Ascending aorta (tissue), 2 donors: ENCODE measurements at regions of chr12 and their contacts with region 1.

Region 1: DNA sequence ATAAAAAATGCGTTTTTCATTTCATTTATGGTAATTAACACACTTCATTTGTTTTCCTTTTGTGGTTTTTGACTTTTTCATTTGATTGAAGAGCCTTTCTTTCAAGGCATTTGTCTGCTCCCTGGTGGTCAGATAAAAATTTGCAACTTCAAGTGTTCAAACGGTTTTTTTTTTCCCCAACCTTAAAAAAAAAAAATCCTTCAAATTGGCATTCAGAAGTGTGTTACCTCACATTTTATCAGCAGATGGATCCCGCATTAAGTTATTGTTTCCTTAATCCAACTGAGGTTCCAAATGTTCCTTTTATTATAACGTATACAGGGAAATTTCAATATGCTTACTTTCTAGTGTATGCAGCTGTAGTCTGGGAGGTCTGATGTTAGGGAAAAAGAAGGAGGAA is 47.2 kb downstream of the MYF5 start:
- DNase-seq: no peak
- H3K4me3 ChIP-seq: no peak overlapping the region
- H3K27ac ChIP-seq: no peak overlapping the region
- H3K4me1 ChIP-seq: no peaks in the 10 kb centered on the region
- H3K27me3 ChIP-seq: no peaks in the 10 kb centered on the region
- CTCF ChIP-seq: peak in 2 of 3 experiments; percentile 52 to 59

Region 2: DNA sequence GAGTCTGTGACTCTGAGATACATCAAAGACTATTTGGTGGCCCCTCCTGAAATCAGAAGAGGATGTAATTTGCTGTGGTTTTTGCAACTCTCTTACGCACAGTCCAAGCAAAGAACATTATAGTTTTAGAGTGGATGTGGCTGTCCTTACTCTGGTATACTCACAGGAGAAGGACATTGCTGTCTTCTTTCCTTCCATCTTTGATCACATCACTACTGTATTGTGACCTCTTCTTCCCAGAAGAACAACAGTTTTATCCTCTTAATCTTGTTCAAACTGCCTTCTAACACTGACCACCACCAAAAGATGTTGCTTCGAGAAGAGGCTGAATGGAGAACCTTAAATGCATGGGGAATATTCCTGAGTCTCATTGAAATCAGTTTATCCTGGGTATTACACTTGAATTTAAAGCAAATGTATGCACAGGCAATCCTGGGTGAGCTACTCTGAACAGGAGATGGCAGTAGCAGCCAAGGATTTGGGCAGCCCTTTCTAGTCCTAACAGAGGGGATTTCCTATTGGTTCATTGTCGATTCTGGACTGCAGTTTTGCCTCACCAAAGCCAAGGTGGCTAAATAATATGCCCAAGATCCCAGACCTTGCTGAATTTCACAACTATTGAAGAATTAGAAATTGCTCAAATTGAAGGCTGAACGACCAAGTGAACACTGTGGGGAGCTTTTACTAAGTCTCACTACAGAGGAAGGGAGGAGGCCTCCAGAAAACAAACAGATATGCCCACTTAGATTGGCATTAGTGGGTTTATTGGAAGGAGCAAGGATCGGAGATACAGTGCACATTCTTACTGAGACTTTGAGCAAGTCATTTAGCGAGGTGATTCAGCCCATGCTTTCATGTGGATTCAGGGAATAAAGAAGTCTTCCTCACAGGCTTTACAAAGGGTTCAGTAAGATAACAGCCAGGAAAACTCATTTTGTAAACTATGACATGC is 1355.9 kb before region 1 on chr12:
- intact Hi-C with region 1: loop called (anchors 10 kb)
- DNase-seq: peak in 1 of 2 donors; percentile 77
- H3K4me3 ChIP-seq: no peak overlapping the region
- H3K27ac ChIP-seq: peak overlapping the region; percentile 63 to 65
- H3K4me1 ChIP-seq: peaks cover 3 to 17% of the 10 kb centered on the region in 2 donors
- H3K27me3 ChIP-seq: no peaks in the 10 kb centered on the region
- CTCF ChIP-seq: peak; percentile 55 to 76 (median 57)

Region 3: DNA sequence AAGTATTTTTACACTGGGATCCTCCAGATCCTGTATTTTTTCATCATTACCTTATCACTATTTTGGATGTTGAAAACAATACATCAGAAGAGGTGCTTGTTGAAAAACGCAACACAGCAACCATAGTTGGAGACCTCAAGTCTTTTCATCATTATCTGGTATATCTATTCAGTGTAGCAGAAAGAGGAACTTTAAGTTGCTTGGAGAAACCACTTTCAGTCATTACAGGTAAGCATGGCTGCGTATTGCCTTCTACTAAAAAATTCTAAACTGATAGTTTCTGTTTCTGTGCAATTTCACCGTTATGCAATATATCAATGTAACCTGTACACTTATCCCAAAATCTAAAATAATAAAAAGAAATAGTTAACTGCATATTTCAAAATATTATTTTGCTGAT is 352.1 kb before region 1 on chr12:
- intact Hi-C with region 1: loop called (anchors 1 kb)
- DNase-seq: no peak
- H3K4me3 ChIP-seq: no peak overlapping the region
- H3K27ac ChIP-seq: no peak overlapping the region
- H3K4me1 ChIP-seq: no peaks in the 10 kb centered on the region
- H3K27me3 ChIP-seq: no peaks in the 10 kb centered on the region
- CTCF ChIP-seq: no peak

Region 4: DNA sequence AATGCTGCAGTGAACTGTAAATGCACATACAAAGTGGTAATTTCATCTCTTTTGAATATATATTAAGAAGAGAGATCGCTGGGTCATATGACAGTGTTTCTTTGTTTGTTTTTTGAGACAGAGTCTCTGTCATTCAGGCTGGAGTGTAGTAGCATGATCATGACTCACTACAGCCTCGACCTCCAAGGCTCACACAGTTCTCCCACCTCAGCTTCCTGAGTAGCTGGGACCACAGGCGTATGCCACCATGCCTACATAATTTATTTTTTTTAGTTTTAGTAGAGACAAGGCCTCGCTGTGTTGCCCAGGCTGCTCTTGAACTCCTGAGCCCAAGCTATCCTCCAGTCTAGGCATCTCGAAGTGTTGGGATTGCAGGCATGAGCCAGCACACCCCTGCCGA is 251.6 kb after region 1 on chr12:
- intact Hi-C with region 1: no loop called
- DNase-seq: no peak
- H3K4me3 ChIP-seq: no peak overlapping the region
- H3K27ac ChIP-seq: no peak overlapping the region
- H3K4me1 ChIP-seq: no peaks in the 10 kb centered on the region
- H3K27me3 ChIP-seq: no peaks in the 10 kb centered on the region
- CTCF ChIP-seq: no peak